ENCODE measurements at regions of chr19 and their contacts with region 1.

Region 1: GRCh38 chr19:10835754-10836477 is at the start of gene TMED1:
- DNase-seq: peak; percentile 93
- H3K4me3 Mint-ChIP-seq: peak within 1 kb of the TSS; percentile 92
- H3K27ac Mint-ChIP-seq: peak within 1 kb of the TSS; percentile 99
- H3K4me1 Mint-ChIP-seq: peaks cover 15% of the 10 kb centered on the region
- H3K27me3 Mint-ChIP-seq: peaks cover 4% of the 10 kb centered on the region
- total RNA-seq, gene TMED1: 19.8 and 21.0 TPM in 2 replicates

Region 2: GRCh38 chr19:10760273-10760944 is 75.5 kb before region 1 on chr19:
- intact Hi-C with region 1: loop called (anchors 1 kb)
- DNase-seq: no peak
- H3K4me3 Mint-ChIP-seq: peak overlapping the region; percentile 66
- H3K27ac Mint-ChIP-seq: peak overlapping the region; percentile 86
- H3K4me1 Mint-ChIP-seq: peaks cover 78% of the 10 kb centered on the region
- H3K27me3 Mint-ChIP-seq: no peaks in the 10 kb centered on the region

Region 3: DNA sequence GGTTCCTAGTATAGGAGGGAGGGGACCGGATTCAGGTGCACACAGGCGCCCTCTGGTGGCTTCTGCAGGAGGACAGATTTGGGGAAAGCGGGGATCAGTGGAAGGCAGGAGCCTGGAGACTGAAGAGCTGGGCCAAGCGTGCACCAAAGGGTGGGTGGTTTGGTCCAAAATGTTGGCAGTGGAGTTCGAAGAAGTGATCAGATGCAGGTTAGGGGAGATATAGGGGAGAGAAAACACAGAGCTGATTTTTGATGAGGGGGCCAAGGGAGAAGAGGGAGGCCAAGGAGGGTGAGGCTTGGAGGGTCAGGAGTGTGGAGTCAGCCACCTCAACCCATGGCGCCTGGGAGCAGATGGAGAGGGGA is 28.6 kb after region 1 on chr19:
- intact Hi-C with region 1: loop called (anchors 1 kb)
- DNase-seq: peak; percentile 68
- H3K4me3 Mint-ChIP-seq: no peak overlapping the region
- H3K27ac Mint-ChIP-seq: peak overlapping the region; percentile 46
- H3K4me1 Mint-ChIP-seq: peaks cover 30% of the 10 kb centered on the region
- H3K27me3 Mint-ChIP-seq: no peaks in the 10 kb centered on the region

Region 4: GRCh38 chr19:10870955-10871603 is 35.2 kb after region 1 on chr19 and contains the start of gene CARM1:
- intact Hi-C with region 1: loop called (anchors 1 kb)
- DNase-seq: peak; percentile 98
- H3K4me3 Mint-ChIP-seq: peak within 1 kb of the TSS; percentile 88
- H3K27ac Mint-ChIP-seq: peak within 1 kb of the TSS; percentile 93
- H3K4me1 Mint-ChIP-seq: peaks cover 37% of the 10 kb centered on the region
- H3K27me3 Mint-ChIP-seq: no peaks in the 10 kb centered on the region
- total RNA-seq, gene CARM1: 85.9 and 88.0 TPM in 2 replicates

Measured in activated T-helper 1 cell treated with anti-CD3 and anti-CD28 coated beads, Interleukin-12 subunit alpha, Interleukin-12 subunit beta, Interleukin-2, Interleukin-4 antibody, amounts not matched to agents 30 ng/mL and 10 ng/mL and 1 ng/mL, durations not matched to agents 14 hours and 24 hours and 36 hours (primary cell).